ENCODE measurements at regions of chr18 and their contacts with region 1.

Region 1: DNA sequence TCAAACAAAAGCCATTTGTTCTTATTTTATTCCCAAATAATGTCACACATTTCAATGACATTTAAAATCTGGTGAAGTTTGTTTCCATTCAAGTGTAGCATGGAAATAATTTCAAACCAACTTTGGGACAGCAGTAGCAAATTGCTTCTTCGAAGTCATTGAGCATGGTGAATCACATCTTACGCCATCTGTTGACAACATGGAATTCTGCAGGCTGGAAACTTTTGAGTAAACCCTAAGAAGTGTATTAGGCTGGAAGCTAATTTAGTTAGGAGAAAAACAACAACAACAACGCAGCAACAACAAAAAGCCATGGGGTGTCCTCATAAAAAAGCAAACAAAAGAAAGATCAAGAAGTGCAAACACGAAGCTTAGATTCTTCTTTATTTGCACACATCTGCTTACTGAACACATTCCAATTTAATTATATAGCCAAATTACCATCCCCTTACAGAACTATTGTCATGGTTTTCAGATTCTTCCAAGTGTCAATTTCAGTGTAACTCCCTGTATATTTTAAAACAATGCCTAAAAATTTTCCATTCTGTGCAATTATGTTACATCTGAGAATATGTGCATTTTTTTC is 659.0 kb upstream of the CDH7 start:
- DNase-seq: peak in 1 of 2 experiments; percentile 13
- H3K4me3 ChIP-seq: no peak overlapping the region
- H3K27ac ChIP-seq: no peak overlapping the region
- H3K4me1 ChIP-seq: 0 out of 7 replicates have a peak, but pooled peaks cover 0 to 2% (median 0%) of the 10 kb centered on the region in 4 experiments
- H3K27me3 ChIP-seq: peaks cover 0 to 1% (median 0%) of the 10 kb centered on the region in 4 experiments; a peak in 1 of 7 replicates
- CTCF ChIP-seq: peak in 2 of 3 experiments; percentile 41 to 72; a peak in 2 of 4 replicates
- EP300 ChIP-seq: no peak
- POLR2A ChIP-seq: no peak
- RAD21 ChIP-seq: peak; percentile 59 to 70

Region 2: GRCh38 chr18:65073060-65073550 is 18.7 kb before region 1 on chr18:
- CTCF ChIA-PET with region 1: interaction called, 21 read pairs
- POLR2A ChIA-PET with region 1: no interaction called
- DNase-seq: no peak
- H3K4me3 ChIP-seq: no peak overlapping the region
- H3K27ac ChIP-seq: no peak overlapping the region
- H3K4me1 ChIP-seq: no peaks in the 10 kb centered on the region
- H3K27me3 ChIP-seq: no peaks in the 10 kb centered on the region
- CTCF ChIP-seq: no peak
- EP300 ChIP-seq: no peak
- POLR2A ChIP-seq: no peak
- RAD21 ChIP-seq: no peak

Region 3: DNA sequence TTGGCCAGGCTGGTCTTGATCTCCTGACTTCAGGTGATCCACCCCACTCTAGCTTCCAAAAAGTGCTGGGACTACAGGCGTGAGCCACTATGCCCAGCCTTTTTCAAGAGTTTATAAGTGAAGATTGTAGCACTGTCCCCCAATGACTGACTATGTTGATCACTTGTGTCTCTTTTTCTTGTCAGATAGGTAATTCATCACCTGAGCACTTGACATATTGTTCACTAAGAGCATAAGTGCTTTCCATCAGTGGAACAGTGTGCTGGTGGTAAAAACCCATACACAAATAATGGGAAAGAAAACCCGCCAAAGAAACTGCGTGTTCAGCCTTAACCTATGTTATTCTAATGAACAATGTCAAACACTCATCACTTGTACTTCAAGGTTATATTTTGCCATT is 244.6 kb after region 1 on chr18:
- CTCF ChIA-PET with region 1: no interaction called
- POLR2A ChIA-PET with region 1: no interaction called
- DNase-seq: no peak
- H3K4me3 ChIP-seq: no peak overlapping the region
- H3K27ac ChIP-seq: no peak overlapping the region
- H3K4me1 ChIP-seq: no peaks in the 10 kb centered on the region
- H3K27me3 ChIP-seq: no peaks in the 10 kb centered on the region
- CTCF ChIP-seq: no peak
- EP300 ChIP-seq: no peak
- POLR2A ChIP-seq: no peak
- RAD21 ChIP-seq: no peak